AG04449 (cell line): ENCODE measurements at regions of chr9 and their contacts with region 1.

Region 1: GRCh38 chr9:69056191-69056815 is 20.8 kb downstream of the FXN start:
- DNase-seq: no peak
- H3K4me3 ChIP-seq: no peak overlapping the region
- CTCF ChIP-seq: no peak

Region 2: GRCh38 chr9:68416936-68417564 is 639.3 kb before region 1 on chr9:
- CTCF ChIA-PET with region 1: no interaction called
- POLR2A ChIA-PET with region 1: no interaction called
- DNase-seq: no peak
- H3K4me3 ChIP-seq: no peak overlapping the region
- CTCF ChIP-seq: no peak

Region 3: GRCh38 chr9:69044240-69045219 is 11.8 kb before region 1 on chr9:
- CTCF ChIA-PET with region 1: interaction called, 35 read pairs
- POLR2A ChIA-PET with region 1: no interaction called
- DNase-seq: no peak
- H3K4me3 ChIP-seq: no peak overlapping the region
- CTCF ChIP-seq: no peak

Region 4: DNA sequence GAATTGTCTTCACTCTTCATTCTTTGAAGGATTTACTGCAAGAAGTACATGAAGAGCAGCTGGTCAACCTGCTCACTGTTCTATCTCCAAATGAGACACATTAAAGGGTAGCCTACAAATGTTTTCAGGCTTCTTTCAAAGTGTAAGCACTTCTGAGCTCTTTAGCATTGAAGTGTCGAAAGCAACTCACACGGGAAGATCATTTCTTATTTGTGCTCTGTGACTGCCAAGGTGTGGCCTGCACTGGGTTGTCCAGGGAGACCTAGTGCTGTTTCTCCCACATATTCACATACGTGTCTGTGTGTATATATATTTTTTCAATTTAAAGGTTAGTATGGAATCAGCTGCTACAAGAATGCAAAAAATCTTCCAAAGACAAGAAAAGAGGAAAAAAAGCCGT is 16.8 kb after region 1 on chr9:
- CTCF ChIA-PET with region 1: interaction called, 36 read pairs
- POLR2A ChIA-PET with region 1: no interaction called
- DNase-seq: no peak
- H3K4me3 ChIP-seq: no peak overlapping the region
- CTCF ChIP-seq: no peak

Region 5: DNA sequence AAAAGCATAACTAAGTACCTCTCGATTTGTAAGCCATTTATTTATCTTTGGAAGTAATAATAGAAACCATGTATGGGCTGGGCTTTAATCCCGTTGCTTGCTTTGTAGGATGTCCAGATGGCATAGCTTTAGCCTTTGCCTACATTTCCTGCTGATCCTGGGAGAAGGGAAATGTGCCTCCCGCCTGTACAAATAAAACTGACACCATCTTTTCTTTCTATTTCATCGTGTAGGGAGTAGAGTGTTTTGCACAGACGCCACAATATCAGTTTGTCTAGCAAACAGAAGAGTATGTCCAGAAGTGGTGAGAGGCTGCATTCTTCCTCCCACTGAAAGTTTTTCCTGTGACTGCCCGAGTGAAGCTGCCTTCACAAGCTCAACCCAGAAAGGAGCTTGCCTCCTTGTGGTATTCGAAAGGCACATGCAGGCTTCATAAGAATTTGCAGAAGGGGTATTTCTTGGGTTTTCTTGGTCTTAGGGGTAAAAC is 93.1 kb after region 1 on chr9:
- CTCF ChIA-PET with region 1: interaction called, 17 read pairs
- POLR2A ChIA-PET with region 1: interaction called, 3 read pairs
- DNase-seq: peak; percentile 57
- H3K4me3 ChIP-seq: peak overlapping the region; percentile 29
- CTCF ChIP-seq: peak; percentile 46

Region 6: DNA sequence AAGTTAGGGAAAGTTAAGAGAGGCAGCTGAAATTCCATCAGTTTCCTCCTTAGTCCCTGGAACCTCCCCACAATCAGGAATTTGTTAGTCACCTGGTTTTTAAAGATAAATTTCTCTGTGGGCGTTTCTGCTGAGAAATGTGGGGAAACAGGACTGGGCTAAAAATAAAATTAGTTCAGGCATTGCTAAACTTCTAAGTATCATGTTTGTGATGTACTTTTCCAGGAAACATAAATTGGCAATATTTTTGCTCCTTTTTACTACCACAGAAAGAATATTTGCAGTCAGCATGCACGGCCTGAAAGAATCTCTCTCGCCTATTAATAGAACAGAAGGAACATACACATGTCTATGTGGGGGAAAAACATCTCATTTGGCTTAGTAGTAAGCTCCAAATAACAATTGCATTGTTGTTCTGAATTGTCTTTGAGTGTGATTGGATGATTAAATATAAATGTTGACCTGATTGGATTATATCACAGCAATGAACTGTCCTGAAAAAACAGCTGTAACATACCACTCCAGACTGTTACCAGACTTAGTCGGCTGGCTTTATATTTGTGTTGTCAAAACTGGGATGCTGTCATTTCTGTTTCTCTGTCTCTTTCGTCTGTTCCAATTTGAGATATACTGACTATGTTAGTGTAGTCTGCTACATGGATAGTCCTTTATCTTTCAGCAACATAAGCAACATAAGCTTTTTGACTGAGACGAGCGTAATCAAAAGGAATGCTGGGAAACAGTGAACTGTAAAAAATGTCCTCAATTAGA is 130.7 kb after region 1 on chr9:
- CTCF ChIA-PET with region 1: interaction called, 511 read pairs
- POLR2A ChIA-PET with region 1: no interaction called
- DNase-seq: no peak
- H3K4me3 ChIP-seq: no peak overlapping the region
- CTCF ChIP-seq: no peak

Region 7: GRCh38 chr9:69223605-69224004 is 167.3 kb after region 1 on chr9:
- CTCF ChIA-PET with region 1: interaction called, 12 read pairs
- POLR2A ChIA-PET with region 1: no interaction called
- DNase-seq: peak; percentile 38
- H3K4me3 ChIP-seq: no peak overlapping the region
- CTCF ChIP-seq: peak; percentile 82